Panc1 (cell line): ENCODE measurements at regions of chr6 and their contacts with region 1.

Region 1: DNA sequence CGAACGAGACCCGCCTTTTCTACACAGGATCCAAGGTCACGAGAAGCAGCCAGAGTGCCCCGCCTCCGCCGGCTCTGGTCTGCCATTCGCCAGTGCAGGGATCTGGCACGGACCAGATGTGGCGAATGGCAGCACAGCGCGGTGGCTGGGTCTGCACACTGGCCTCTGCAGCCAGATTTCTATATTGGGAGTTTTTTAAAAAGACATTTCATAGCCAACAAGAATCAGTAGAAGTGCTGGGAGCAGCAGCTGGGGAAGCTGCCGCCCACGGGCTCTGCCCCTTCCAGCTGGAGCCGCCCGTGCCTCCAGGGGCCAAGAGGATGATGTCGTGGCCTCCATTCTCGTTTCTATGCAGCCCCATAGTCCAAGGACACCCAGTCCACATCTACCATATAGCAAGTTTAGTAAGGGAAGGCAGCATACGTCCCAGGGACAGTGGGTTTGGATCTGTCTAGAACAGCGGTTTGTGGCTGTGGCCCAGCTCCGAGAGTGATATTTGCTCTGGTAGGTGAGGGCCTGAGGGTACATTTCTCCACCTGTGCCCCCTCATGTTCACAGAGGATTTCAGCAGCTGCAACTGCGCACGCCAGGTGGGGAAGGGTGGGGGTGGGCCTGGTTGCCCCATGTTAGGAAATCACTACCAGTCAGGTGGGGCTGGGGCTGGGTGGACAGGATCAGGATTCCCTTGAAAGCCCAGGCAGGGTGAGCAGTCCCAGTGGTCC is 333.7 kb downstream of the ZFAND3 start:
- DNase-seq: no peak
- ATAC-seq: no peak
- H3K4me3 ChIP-seq: no peak overlapping the region
- H3K27ac ChIP-seq: no peak overlapping the region
- H3K4me1 ChIP-seq: peaks cover 5% of the 10 kb centered on the region; the same call in 1 of the 2 replicates
- H3K27me3 ChIP-seq: no peaks in the 10 kb centered on the region
- CTCF ChIP-seq: no peak

Region 2: GRCh38 chr6:37807656-37808055 is 345.6 kb before region 1 on chr6:
- CTCF ChIA-PET with region 1: no interaction called
- POLR2A ChIA-PET with region 1: no interaction called
- in situ Hi-C with region 1: no loop called
- intact Hi-C with region 1: no loop called
- DNase-seq: no peak
- ATAC-seq: peak; percentile 71
- H3K4me3 ChIP-seq: no peak overlapping the region
- H3K27ac ChIP-seq: no peak overlapping the region
- H3K4me1 ChIP-seq: peaks cover 3% of the 10 kb centered on the region; the same call in 1 of the 2 replicates
- H3K27me3 ChIP-seq: no peaks in the 10 kb centered on the region; the same call in 1 of the 2 replicates
- CTCF ChIP-seq: no peak

Region 3: GRCh38 chr6:38512211-38512610 is 359.0 kb after region 1 on chr6:
- CTCF ChIA-PET with region 1: no interaction called
- POLR2A ChIA-PET with region 1: interaction called, 14 read pairs
- in situ Hi-C with region 1: no loop called
- intact Hi-C with region 1: no loop called
- DNase-seq: no peak
- ATAC-seq: no peak
- H3K4me3 ChIP-seq: no peak overlapping the region
- H3K27ac ChIP-seq: no peak overlapping the region
- H3K4me1 ChIP-seq: no peaks in the 10 kb centered on the region
- H3K27me3 ChIP-seq: no peaks in the 10 kb centered on the region
- CTCF ChIP-seq: no peak